Gastrocnemius medialis (tissue), 4 donors: ENCODE measurements at regions of chr11 and their contacts with region 1.

Region 1: DNA sequence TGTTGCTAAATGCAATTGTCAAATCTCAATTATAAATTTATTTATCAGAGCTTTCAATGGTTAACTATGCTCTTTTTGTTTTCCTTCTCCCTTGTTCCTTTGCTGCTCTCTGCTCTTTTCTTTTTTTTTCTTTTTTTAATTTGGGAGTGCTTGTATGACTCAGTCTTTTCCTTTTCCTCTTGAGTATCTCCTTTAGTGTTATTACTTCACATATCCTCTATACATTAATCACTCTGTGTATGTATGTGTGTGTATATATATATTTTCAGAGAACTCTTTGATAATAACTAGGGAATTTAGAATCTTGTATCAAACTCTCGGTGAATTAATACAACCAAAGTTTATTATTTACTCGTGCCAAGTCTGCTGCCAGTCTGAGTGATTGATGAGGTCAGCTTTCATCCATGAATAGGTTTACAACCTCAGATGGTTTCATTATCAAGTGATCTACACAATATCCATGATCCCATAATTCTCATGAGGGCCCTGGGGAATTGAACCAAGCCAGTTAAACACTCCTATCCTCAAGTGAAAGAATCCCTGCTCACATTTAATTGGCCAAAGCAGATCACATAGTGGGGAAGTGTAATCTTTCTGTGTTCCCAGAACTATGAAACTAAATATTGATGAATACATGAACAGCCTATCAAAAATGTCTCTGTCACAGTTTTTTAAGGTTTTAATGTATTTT is 743.4 kb upstream of the CNTN5 start:
- DNase-seq: no peak
- ATAC-seq: no peak
- H3K4me3 ChIP-seq: no peak overlapping the region
- H3K27ac ChIP-seq: no peak overlapping the region
- H3K4me1 ChIP-seq: no peaks in the 10 kb centered on the region
- H3K27me3 ChIP-seq: no peaks in the 10 kb centered on the region
- CTCF ChIP-seq: no peak
- POLR2A ChIP-seq: no peak

Region 2: DNA sequence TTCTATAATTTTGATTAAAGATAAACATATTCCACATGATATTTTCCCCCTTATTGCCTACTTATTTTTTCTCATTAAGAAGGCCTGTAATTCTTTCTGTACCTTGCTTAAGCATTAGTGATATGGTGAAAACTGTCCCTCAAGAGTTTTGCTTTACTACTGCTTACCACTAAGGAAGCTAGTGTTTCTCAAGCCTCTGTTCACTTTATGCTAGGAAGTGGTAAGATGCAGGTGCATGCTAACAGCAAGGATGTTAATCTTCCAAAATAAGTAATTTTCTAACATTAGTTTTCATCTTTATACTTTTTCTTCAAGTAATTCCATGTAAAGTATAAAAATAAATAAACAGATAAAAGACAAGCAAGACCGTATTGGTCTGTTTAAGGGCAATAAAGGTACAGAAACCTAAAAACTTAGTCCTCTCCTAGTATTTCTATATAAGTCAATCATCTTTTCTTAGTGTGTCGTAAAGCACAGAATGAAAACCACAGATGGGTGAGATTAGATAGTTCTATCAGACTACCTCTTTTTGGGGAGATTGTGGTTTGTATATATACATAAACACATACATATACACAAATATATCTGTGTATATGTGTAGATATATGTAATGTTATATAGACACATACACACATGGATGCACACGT is 12.3 kb after region 1 on chr11:
- in situ Hi-C with region 1: no loop called
- intact Hi-C with region 1: loop called (anchors 1 kb)
- DNase-seq: no peak
- ATAC-seq: no peak
- H3K4me3 ChIP-seq: no peak overlapping the region
- H3K27ac ChIP-seq: no peak overlapping the region
- H3K4me1 ChIP-seq: no peaks in the 10 kb centered on the region
- H3K27me3 ChIP-seq: no peaks in the 10 kb centered on the region
- CTCF ChIP-seq: no peak
- POLR2A ChIP-seq: no peak